OCI-LY7 (cell line): ENCODE measurements at regions of chr4 and their contacts with region 1.

Region 1: GRCh38 chr4:15729910-15730533 is 27.2 kb downstream of the BST1 start:
- DNase-seq: peak; percentile 78
- H3K4me3 ChIP-seq: no peak overlapping the region
- H3K27ac ChIP-seq: no peak overlapping the region
- H3K4me1 ChIP-seq: peaks cover 42% of the 10 kb centered on the region
- CTCF ChIP-seq: peak; percentile 99

Region 2: DNA sequence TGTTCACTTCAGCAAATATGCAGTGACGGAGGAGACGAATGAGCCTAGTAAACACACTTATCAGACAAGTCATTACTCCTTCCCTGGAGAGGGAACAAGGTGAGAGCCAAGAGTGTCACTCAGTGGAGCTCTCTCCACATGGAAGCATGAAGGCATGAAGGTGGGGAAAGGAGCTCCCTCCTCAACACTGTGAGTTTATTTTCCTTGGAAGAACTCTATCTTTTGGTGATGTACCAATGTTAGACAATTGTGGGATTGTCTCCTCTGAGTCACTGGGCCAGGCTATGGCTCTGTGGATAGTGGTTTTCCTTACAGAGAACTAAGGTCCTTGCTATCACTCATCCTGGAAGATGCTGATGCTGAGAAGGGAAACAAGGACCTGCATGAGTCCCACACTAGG is 527.5 kb before region 1 on chr4:
- CTCF ChIA-PET with region 1: no interaction called
- POLR2A ChIA-PET with region 1: no interaction called
- intact Hi-C with region 1: no loop called
- DNase-seq: no peak
- H3K4me3 ChIP-seq: no peak overlapping the region
- H3K27ac ChIP-seq: no peak overlapping the region
- H3K4me1 ChIP-seq: no peaks in the 10 kb centered on the region
- CTCF ChIP-seq: no peak

Region 3: GRCh38 chr4:15479089-15479912 is 250.7 kb before region 1 on chr4:
- CTCF ChIA-PET with region 1: no interaction called
- POLR2A ChIA-PET with region 1: no interaction called
- intact Hi-C with region 1: loop called (anchors 5 kb)
- DNase-seq: peak; percentile 44
- H3K4me3 ChIP-seq: no peak overlapping the region
- H3K27ac ChIP-seq: no peak overlapping the region
- H3K4me1 ChIP-seq: no peaks in the 10 kb centered on the region
- CTCF ChIP-seq: peak; percentile 80

Region 4: GRCh38 chr4:15681207-15682015 is 48.6 kb before region 1 on chr4 and contains the start of gene FAM200B:
- CTCF ChIA-PET with region 1: no interaction called
- POLR2A ChIA-PET with region 1: interaction called, 16 read pairs
- intact Hi-C with region 1: no loop called
- DNase-seq: peak; percentile 99
- H3K4me3 ChIP-seq: peak within 1 kb of the TSS; percentile 90
- H3K27ac ChIP-seq: peak within 1 kb of the TSS; percentile 90
- H3K4me1 ChIP-seq: peaks cover 55% of the 10 kb centered on the region
- CTCF ChIP-seq: no peak
- total RNA-seq, gene FAM200B: 11.0 and 11.5 TPM in 2 replicates

Region 5: GRCh38 chr4:15805583-15806517 is 75.8 kb after region 1 on chr4:
- CTCF ChIA-PET with region 1: interaction called, 3 read pairs
- POLR2A ChIA-PET with region 1: interaction called, 3 read pairs
- intact Hi-C with region 1: loop called (anchors 1 kb)
- DNase-seq: peak; percentile 81
- H3K4me3 ChIP-seq: no peak overlapping the region
- H3K27ac ChIP-seq: peak overlapping the region; percentile 60
- H3K4me1 ChIP-seq: peaks cover 90% of the 10 kb centered on the region
- CTCF ChIP-seq: peak; percentile 94

Region 6: DNA sequence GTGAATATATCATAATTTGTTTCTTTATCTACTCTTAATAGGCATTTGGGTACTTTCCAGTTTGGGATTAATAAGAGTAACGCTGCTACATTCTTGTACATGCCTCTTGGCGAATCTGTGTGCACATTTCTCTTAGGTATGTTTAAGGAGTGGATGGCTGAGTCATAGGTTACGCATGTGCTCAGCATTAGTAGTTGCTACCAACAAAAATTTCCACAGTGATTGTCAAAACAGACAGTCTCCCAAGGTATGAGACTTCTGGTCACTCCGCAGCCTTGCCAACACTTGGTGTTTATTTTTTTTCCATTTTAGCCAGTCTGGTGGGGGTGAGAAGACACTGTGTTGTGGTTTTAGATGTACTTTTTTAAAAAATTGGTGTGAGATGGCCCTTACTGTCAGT is 163.9 kb after region 1 on chr4:
- CTCF ChIA-PET with region 1: no interaction called
- POLR2A ChIA-PET with region 1: no interaction called
- intact Hi-C with region 1: no loop called
- DNase-seq: no peak
- H3K4me3 ChIP-seq: no peak overlapping the region
- H3K27ac ChIP-seq: no peak overlapping the region
- H3K4me1 ChIP-seq: peaks cover 17% of the 10 kb centered on the region
- CTCF ChIP-seq: no peak

Region 7: GRCh38 chr4:15956179-15956850 is 226.3 kb after region 1 on chr4:
- CTCF ChIA-PET with region 1: no interaction called
- POLR2A ChIA-PET with region 1: no interaction called
- intact Hi-C with region 1: loop called (anchors 1 kb)
- DNase-seq: peak; percentile 82
- H3K4me3 ChIP-seq: no peak overlapping the region
- H3K27ac ChIP-seq: no peak overlapping the region
- H3K4me1 ChIP-seq: no peaks in the 10 kb centered on the region
- CTCF ChIP-seq: peak; percentile 94